Activated T-helper 2 cell treated with anti-CD3 and anti-CD28 coated beads, Interferon-gamma antibody, Interleukin-2, Interleukin-4, amounts not matched to agents 10 μg/mL and 5 μg/mL and 100 μg/mL, durations not matched to agents 14 hours and 24 hours and 36 hours (primary cell): ENCODE measurements at regions of chr1 and their contacts with region 1.

Region 1: GRCh38 chr1:32817159-32817814 is at the starts of genes S100PBP and YARS1:
- DNase-seq: peak; percentile 100
- H3K4me3 Mint-ChIP-seq: peak within 1 kb of the TSS; percentile 99
- H3K27ac Mint-ChIP-seq: peak within 1 kb of the TSS; percentile 96
- H3K4me1 Mint-ChIP-seq: peaks cover 46% of the 10 kb centered on the region
- H3K27me3 Mint-ChIP-seq: no peaks in the 10 kb centered on the region
- total RNA-seq, gene S100PBP: 50.2 and 50.5 TPM in 2 replicates
- total RNA-seq, gene YARS1: 155 and 172 TPM in 2 replicates

Region 2: GRCh38 chr1:32205401-32206370 is 611.6 kb before region 1 on chr1 and contains the start of gene IQCC:
- intact Hi-C with region 1: loop called (anchors 10 kb)
- DNase-seq: peak; percentile 82
- H3K4me3 Mint-ChIP-seq: peak within 1 kb of the TSS; percentile 87
- H3K27ac Mint-ChIP-seq: peak within 1 kb of the TSS; percentile 83
- H3K4me1 Mint-ChIP-seq: peaks cover 28% of the 10 kb centered on the region
- H3K27me3 Mint-ChIP-seq: no peaks in the 10 kb centered on the region
- total RNA-seq, gene IQCC: 5.0 and 5.4 TPM in 2 replicates

Region 3: DNA sequence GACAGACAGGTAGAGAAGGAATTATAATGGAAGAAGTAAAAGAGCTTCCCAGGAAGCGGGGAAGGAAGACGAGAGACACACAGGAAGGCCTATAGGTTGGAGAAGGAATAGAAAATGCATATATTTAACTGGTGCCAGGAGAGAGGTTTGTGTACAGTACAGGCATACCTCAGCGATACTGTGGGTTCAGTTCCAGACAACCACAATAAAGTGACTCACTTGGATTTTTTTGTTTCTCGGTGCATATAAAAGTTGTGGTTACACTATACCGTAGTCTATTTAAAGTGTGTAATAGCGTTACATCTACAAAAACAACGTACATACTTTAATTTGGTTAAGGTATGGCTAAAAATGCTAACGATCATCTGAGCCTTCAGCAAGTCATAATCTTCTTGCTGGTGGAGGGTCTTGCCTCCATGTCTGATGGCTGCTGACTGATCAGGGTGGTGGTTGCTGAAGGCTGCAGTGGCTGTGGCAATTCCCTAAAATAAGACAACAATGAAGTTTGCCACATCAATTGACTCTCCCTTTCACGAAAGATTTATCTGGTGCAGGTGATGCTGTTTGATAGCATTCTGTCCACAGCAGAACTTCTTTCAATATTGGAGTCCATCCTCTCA is 16.1 kb before region 1 on chr1:
- intact Hi-C with region 1: loop called (anchors 1 kb)
- DNase-seq: no peak
- H3K4me3 Mint-ChIP-seq: peak overlapping the region; percentile 67
- H3K27ac Mint-ChIP-seq: peak overlapping the region; percentile 92
- H3K4me1 Mint-ChIP-seq: peaks cover 43% of the 10 kb centered on the region
- H3K27me3 Mint-ChIP-seq: no peaks in the 10 kb centered on the region